ENCODE measurements at regions of chr16 and their contacts with region 1.

Region 1: GRCh38 chr16:58582971-58583765 is 46.5 kb downstream of the CNOT1 start:
- DNase-seq: no peak
- ATAC-seq: peak in 1 of 4 donors; percentile 34
- H3K4me3 ChIP-seq: no peak overlapping the region
- H3K27ac ChIP-seq: no peak overlapping the region
- H3K4me1 ChIP-seq: peaks cover 0 to 10% (median 1%) of the 10 kb centered on the region in 12 donors
- H3K27me3 ChIP-seq: no peaks in the 10 kb centered on the region
- CTCF ChIP-seq: no peak
- POLR2A ChIP-seq: no peak

Region 2: GRCh38 chr16:58487566-58488351 is 95.4 kb before region 1 on chr16:
- intact Hi-C with region 1: no loop called
- DNase-seq: peak; percentile 87 to 94 (median 92)
- ATAC-seq: peak; percentile 44 to 82 (median 73)
- H3K4me3 ChIP-seq: peak overlapping the region in 9 of 12 donors; percentile 15 to 39 (median 28)
- H3K27ac ChIP-seq: peak overlapping the region; percentile 6 to 80 (median 68)
- H3K4me1 ChIP-seq: peaks cover 0 to 76% (median 35%) of the 10 kb centered on the region in 12 donors
- H3K27me3 ChIP-seq: no peaks in the 10 kb centered on the region
- CTCF ChIP-seq: peak; percentile 89 to 99 (median 94)
- POLR2A ChIP-seq: peak in 1 of 2 donors; percentile 16

Region 3: GRCh38 chr16:58511933-58512815 is 71.0 kb before region 1 on chr16:
- intact Hi-C with region 1: no loop called
- DNase-seq: peak; percentile 66 to 88 (median 73)
- ATAC-seq: peak; percentile 1 to 29 (median 10)
- H3K4me3 ChIP-seq: no peak overlapping the region
- H3K27ac ChIP-seq: peak overlapping the region in 1 of 12 donors; percentile 22
- H3K4me1 ChIP-seq: peaks cover 0 to 35% (median 15%) of the 10 kb centered on the region in 12 donors
- H3K27me3 ChIP-seq: no peaks in the 10 kb centered on the region
- CTCF ChIP-seq: peak; percentile 54 to 84 (median 72)
- POLR2A ChIP-seq: no peak

Region 4: DNA sequence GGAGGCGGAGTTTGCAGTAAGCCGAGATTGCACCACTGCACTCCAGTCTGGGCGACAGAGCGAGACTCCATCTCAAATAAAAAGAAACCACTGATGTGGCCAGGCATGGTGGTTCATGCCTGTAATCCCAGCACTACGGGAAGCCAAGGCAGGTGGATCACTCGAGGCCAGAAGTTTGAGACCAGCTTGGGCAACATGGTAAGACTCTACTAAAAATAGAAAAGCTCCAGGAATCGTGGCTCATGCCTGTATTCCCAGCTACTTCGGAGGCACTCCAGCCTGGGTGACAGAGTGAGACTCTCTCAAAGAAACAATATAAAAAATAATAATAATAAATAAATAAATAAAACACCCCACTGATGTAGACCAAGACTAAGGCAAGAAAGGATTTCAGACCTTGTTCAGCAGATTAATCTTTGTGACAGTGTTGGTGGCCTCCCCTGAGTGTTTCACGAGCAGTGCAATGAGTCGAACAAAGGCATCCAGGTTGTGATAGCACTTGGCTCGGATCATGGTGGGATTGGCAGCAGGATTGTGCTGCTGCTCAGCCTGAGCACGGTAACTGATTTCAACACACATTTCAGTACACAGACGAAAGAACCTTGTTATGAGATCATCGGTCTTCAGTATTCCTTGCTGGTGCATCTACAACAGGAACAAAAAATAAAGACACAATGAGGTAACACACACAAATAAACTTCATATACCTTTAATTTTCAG is 49.3 kb before region 1 on chr16:
- intact Hi-C with region 1: loop called in 2 of 10 experiments (anchors 10 kb)
- DNase-seq: peak in 2 of 5 donors; percentile 36 to 72
- ATAC-seq: peak; percentile 79 to 87 (median 84)
- H3K4me3 ChIP-seq: no peak overlapping the region
- H3K27ac ChIP-seq: peak overlapping the region in 10 of 12 donors; percentile 11 to 56 (median 45)
- H3K4me1 ChIP-seq: peaks cover 0 to 36% (median 3%) of the 10 kb centered on the region in 12 donors
- H3K27me3 ChIP-seq: no peaks in the 10 kb centered on the region
- CTCF ChIP-seq: no peak
- POLR2A ChIP-seq: no peak

Region 5: DNA sequence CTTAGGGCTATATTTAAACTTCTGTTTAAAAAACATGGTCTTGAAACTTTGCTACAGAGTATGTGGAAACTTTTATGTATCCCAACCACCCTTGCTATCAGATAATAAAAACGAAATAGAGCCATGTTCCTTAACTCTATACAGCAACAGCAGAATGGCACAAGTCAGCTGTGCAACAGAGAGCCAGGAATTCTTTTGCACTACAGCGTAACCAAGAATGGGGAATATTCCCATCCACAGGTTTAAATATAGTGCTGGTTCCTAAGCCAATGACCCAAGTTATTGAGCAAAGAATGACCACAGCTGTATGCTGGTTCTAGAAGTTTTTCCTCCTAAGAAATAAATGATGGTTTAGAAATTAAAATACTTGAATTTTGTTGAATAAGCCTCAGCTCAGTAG is 34.8 kb before region 1 on chr16:
- intact Hi-C with region 1: loop called in 3 of 10 experiments (anchors 5 kb)
- DNase-seq: no peak
- ATAC-seq: peak; percentile 48 to 74 (median 56)
- H3K4me3 ChIP-seq: no peak overlapping the region
- H3K27ac ChIP-seq: peak overlapping the region; percentile 12 to 72 (median 45)
- H3K4me1 ChIP-seq: peaks cover 0 to 32% (median 3%) of the 10 kb centered on the region in 12 donors
- H3K27me3 ChIP-seq: no peaks in the 10 kb centered on the region
- CTCF ChIP-seq: no peak
- POLR2A ChIP-seq: no peak